H1 (cell line): ENCODE measurements at regions of chr16 and their contacts with region 1.

Region 1: GRCh38 chr16:82152196-82153112 is 17.6 kb downstream of the MPHOSPH6 start:
- DNase-seq: no peak
- H3K4me3 ChIP-seq: no peak overlapping the region
- H3K27ac ChIP-seq: no peak overlapping the region
- H3K4me1 ChIP-seq: 0 out of 7 replicates have a peak, but pooled peaks cover 0 to 2% (median 0%) of the 10 kb centered on the region in 4 experiments
- H3K27me3 ChIP-seq: no peaks in the 10 kb centered on the region; a peak in 1 of 7 replicates
- CTCF ChIP-seq: no peak
- EP300 ChIP-seq: no peak
- POLR2A ChIP-seq: no peak
- RAD21 ChIP-seq: no peak

Region 2: GRCh38 chr16:82111944-82112343 is 40.5 kb before region 1 on chr16:
- CTCF ChIA-PET with region 1: no interaction called
- POLR2A ChIA-PET with region 1: no interaction called
- DNase-seq: no peak
- H3K4me3 ChIP-seq: no peak overlapping the region
- H3K27ac ChIP-seq: no peak overlapping the region
- H3K4me1 ChIP-seq: no peaks in the 10 kb centered on the region
- H3K27me3 ChIP-seq: no peaks in the 10 kb centered on the region
- CTCF ChIP-seq: no peak
- EP300 ChIP-seq: no peak
- POLR2A ChIP-seq: no peak
- RAD21 ChIP-seq: no peak

Region 3: DNA sequence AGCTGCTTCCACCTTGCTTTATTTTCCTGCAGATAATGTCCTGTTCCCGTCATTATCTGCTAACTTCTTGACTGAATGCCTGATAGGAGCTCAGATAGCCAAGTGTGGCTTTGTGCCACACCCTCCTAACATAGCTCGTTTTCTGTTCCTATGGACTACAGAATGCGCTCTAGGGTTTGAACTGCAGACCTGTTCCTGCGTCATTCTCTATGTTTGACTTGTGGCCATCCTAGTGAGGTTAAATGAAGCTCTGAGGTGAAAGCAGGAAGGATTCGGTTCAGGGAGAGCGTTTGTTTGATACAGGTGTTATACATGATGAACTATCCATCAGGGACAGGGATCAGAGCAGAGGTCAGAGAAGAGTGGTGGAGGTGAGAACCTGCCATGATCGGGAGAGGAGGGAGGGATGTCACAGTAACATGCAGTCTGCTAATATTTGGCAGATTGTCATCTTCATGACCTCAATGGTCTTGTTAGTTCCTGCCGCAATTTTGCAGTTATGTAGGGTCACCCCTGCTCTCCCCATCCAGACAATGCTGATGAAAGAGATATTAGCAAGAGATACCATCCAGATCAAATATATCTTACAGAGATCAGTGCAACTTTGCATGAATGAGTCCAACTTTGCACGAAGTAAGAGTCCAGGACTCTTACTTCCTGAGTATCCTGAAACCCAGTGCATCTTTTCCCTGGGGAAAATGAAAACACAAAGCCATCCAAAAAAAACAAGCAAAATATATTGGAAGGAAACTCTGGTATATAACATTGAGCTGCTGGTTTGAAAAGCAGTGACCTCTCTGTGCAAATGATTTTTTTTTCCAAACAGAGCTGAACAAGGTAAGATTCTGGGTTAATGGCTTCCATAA is 15.3 kb before region 1 on chr16:
- CTCF ChIA-PET with region 1: no interaction called
- POLR2A ChIA-PET with region 1: interaction called, 10 read pairs
- DNase-seq: no peak
- H3K4me3 ChIP-seq: no peak overlapping the region
- H3K27ac ChIP-seq: no peak overlapping the region
- H3K4me1 ChIP-seq: peaks cover 0 to 7% (median 2%) of the 10 kb centered on the region in 4 experiments; a peak in 3 of 7 replicates
- H3K27me3 ChIP-seq: no peaks in the 10 kb centered on the region
- CTCF ChIP-seq: no peak
- EP300 ChIP-seq: no peak
- POLR2A ChIP-seq: no peak
- RAD21 ChIP-seq: no peak

Region 4: DNA sequence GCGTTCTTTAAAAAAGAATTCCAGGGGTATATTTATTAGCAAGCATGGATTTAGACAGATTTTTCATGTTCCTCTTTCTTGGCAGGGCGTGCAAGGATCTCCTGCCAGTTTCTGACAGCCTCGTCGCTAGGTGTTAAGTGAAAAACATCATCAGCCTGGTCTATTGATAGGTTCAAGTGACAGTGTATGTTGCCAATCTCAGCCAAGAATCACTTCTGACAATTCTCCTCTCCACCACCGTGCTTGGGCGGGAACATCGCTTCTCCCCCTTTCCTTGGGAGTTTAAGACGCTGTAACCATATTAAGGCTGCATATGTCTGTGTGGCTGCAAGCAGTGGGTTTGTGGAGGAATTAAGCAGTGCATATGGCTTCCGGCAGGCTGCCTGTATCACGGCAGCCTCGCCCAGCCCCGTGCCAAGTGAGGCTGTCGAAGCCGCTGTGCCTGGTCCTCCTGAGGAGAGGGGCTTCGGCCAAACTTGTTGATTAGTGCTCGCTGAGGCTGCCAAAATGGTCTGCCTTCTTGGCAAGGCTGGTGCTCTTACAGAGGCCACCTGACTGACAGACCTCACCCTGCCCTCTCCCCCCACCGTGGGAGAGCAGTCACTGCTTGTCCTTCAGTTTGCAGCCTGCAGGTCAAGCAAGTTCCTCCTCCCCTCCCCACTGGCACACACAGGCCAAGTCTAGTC is 149.7 kb after region 1 on chr16:
- CTCF ChIA-PET with region 1: no interaction called
- POLR2A ChIA-PET with region 1: no interaction called
- DNase-seq: no peak
- H3K4me3 ChIP-seq: no peak overlapping the region
- H3K27ac ChIP-seq: no peak overlapping the region
- H3K4me1 ChIP-seq: no peaks in the 10 kb centered on the region
- H3K27me3 ChIP-seq: no peaks in the 10 kb centered on the region
- CTCF ChIP-seq: no peak
- EP300 ChIP-seq: no peak
- POLR2A ChIP-seq: no peak
- RAD21 ChIP-seq: no peak